Motor neuron (in vitro differentiated cells): ENCODE measurements at regions of chr2 and their contacts with region 1.

Region 1: DNA sequence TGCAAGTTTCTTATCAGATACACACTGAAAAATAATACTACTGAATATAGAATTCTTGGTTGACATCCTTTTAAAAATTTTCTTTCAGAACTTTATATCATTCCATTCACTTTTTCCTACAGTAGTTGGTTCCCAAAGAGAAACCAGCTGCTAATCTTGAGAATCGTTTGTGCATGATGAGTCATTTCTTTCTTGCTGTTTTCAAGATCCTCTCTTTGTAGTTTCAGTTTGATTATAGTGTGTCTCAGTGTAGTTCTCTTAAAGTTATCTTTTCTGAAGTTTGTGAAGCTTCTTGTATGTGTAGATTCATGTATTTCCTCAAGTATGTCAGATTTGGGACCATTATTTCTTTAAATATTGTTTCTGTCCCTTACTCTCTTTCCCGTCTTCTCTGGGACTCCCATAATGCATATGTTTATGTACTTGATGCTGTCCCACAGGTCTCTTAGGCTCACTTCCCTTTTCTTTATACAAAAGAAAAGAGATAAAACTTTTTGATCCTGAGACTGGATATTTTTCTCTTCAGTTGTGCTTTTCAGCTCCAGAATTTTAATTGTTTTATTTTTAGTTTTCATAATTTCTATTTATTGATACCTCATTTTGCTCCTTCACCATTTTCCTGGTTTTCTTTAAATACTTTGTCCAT is 801.0 kb downstream of the TDRD15 start:
- ATAC-seq: no peak
- H3K4me3 ChIP-seq: no peak overlapping the region
- H3K27ac ChIP-seq: no peak overlapping the region
- H3K4me1 ChIP-seq: no peaks in the 10 kb centered on the region

Region 2: DNA sequence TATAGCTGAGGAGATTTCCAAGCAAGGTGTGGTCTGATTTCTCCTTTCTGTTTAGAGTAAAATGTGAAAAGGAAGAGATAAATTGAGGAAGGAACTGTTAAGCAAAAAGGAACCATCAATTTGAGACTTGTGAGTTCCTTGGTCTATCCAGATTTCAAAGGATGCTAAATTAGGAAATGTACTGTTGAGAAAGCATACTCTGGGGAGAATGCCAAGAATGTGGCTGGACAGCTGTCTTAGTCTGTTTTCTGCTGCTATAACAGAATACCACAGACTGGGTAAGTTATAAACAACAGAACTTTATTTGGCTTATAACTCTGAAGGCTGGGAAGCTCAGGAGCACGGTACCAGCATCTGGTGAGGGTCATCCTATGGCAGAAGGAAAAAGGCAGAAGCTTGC is 296.2 kb after region 1 on chr2:
- in situ Hi-C with region 1: loop called in 1 of 9 experiments (anchors 25 kb)
- ATAC-seq: no peak
- H3K4me3 ChIP-seq: no peak overlapping the region
- H3K27ac ChIP-seq: no peak overlapping the region
- H3K4me1 ChIP-seq: no peaks in the 10 kb centered on the region